GM12878 (cell line): ENCODE measurements at regions of chr1 and their contacts with region 1.

Region 1: GRCh38 chr1:214328770-214329469 is 48.0 kb downstream of the SMYD2 start:
- DNase-seq: peak; percentile 26
- ATAC-seq: peak; percentile 92
- H3K4me3 ChIP-seq: no peak overlapping the region
- H3K27ac ChIP-seq: no peak overlapping the region
- H3K4me1 ChIP-seq: peaks cover 4% of the 10 kb centered on the region; the same call in 1 of the 2 replicates
- H3K27me3 ChIP-seq: no peaks in the 10 kb centered on the region
- CTCF ChIP-seq: peak; percentile 89 to 93 (median 91)
- EP300 ChIP-seq: no peak
- POLR2A ChIP-seq: no peak
- RAD21 ChIP-seq: peak; percentile 99

Region 2: DNA sequence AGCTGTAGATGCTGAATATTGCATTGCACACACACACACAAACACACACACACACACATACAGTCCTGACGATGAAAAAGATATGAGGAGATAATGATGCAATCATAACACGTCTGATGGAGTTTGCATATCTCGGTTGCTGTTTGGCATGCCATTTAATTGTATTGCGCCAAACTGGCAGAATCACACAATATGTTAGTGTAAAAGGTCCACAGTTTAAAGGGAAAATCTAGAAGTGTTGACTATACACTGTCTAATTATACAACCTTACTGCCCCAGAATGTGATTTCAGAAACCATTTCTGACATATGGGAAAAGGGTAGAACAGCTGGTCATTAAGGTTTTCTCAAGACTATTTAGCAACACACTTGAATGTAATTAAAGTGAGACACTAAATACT is 464.8 kb before region 1 on chr1:
- CTCF ChIA-PET with region 1: no interaction called
- POLR2A ChIA-PET with region 1: no interaction called
- RAD21 ChIA-PET with region 1: no interaction called
- SMC1A ChIA-PET with region 1: no interaction called
- in situ Hi-C with region 1: no loop called
- intact Hi-C with region 1: no loop called
- DNase-seq: no peak
- ATAC-seq: no peak
- H3K4me3 ChIP-seq: no peak overlapping the region
- H3K27ac ChIP-seq: no peak overlapping the region
- H3K4me1 ChIP-seq: no peaks in the 10 kb centered on the region
- H3K27me3 ChIP-seq: peaks cover 0 to 3% of the 10 kb centered on the region in 2 experiments; a peak in 1 of 4 replicates
- CTCF ChIP-seq: no peak
- EP300 ChIP-seq: no peak
- POLR2A ChIP-seq: no peak
- RAD21 ChIP-seq: no peak

Region 3: GRCh38 chr1:214205053-214205452 is 123.9 kb before region 1 on chr1:
- CTCF ChIA-PET with region 1: interaction called, 46 read pairs
- POLR2A ChIA-PET with region 1: no interaction called
- RAD21 ChIA-PET with region 1: interaction called, 5 read pairs
- SMC1A ChIA-PET with region 1: interaction called, 5 read pairs
- in situ Hi-C with region 1: loop called (anchors 5 kb)
- intact Hi-C with region 1: no loop called
- DNase-seq: no peak
- ATAC-seq: no peak
- H3K4me3 ChIP-seq: no peak overlapping the region
- H3K27ac ChIP-seq: no peak overlapping the region
- H3K4me1 ChIP-seq: no peaks in the 10 kb centered on the region
- H3K27me3 ChIP-seq: no peaks in the 10 kb centered on the region
- CTCF ChIP-seq: no peak
- EP300 ChIP-seq: no peak
- POLR2A ChIP-seq: no peak
- RAD21 ChIP-seq: no peak

Region 4: DNA sequence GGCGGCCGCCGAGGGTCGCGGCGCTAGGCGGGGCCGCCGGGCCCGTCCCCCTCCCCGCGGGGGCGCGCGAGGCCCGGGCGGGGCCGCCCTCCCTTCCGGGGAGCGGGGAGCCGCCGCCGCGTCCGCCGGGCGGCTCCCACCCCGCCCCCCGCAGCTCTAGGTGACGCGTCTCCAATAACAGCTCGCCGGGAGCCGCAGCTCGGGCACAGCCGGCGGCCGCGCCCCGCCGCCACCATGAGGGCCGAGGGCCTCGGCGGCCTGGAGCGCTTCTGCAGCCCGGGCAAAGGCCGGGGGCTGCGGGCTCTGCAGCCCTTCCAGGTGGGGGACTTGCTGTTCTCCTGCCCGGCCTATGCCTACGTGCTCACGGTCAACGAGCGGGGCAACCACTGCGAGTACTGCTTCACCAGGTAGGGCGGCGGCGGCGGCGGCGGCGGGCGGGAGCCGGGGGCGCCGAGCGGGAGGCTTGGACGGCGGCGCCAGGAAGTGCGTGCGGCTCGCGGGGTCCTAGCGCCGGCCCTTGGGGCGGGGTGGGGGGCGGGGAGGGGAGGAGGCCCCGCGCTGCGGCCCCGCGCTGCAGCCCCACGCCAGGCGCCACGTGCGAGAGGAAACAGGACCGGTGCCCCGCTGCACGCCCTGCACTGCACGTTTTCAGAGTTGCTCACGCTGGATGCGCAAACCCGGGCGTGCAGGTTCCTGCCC is 47.8 kb before region 1 on chr1 and contains the start of gene SMYD2:
- CTCF ChIA-PET with region 1: interaction called, 47 read pairs
- POLR2A ChIA-PET with region 1: no interaction called
- RAD21 ChIA-PET with region 1: interaction called, 8 read pairs
- SMC1A ChIA-PET with region 1: interaction called, 11 read pairs
- in situ Hi-C with region 1: no loop called
- intact Hi-C with region 1: loop called (anchors 5 kb)
- DNase-seq: no peak
- ATAC-seq: peak; percentile 86
- H3K4me3 ChIP-seq: peak within 1 kb of the TSS; percentile 90
- H3K27ac ChIP-seq: peak within 1 kb of the TSS; percentile 71
- H3K4me1 ChIP-seq: no peaks in the 10 kb centered on the region; the same call in 1 of the 2 replicates
- H3K27me3 ChIP-seq: no peaks in the 10 kb centered on the region
- CTCF ChIP-seq: no peak
- EP300 ChIP-seq: no peak
- POLR2A ChIP-seq: peak; percentile 75
- RAD21 ChIP-seq: no peak
- polyA plus RNA-seq, gene SMYD2: 8.3 to 17.0 TPM

Region 5: DNA sequence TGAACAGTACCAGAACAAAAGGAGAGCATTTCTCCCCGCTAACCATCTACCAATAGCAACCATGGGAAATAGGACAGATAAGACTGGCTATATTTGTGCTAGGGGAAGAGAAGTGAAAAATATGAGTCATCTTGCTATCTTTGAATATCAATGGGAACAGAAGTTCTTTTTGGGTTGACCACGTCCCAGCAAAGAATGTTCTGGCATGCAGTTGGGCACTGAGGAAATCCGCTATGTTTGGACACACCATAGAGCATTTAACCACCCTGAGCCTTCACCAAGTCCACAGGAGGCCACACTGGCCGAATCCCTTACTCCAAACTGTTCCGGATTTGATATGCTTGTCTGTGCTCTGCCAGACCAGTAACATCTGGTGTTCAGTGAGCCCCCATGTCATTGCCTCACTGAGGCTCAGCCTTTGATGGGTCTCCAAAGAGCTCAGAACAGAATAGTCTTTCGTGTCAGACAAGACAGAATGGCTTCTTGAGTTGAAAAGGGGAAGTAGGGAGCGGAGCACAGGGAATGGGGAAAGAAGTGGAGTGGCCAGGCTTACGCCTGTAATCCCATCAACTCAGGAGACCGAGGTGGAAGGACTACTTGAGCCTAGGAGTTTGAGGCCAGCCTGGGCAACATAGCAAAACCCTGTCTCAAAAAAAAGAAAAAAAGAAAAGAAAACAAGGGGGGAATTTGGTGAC is 33.4 kb after region 1 on chr1:
- CTCF ChIA-PET with region 1: interaction called, 15 read pairs
- POLR2A ChIA-PET with region 1: no interaction called
- RAD21 ChIA-PET with region 1: interaction called, 3 read pairs
- SMC1A ChIA-PET with region 1: interaction called, 5 read pairs
- in situ Hi-C with region 1: no loop called
- intact Hi-C with region 1: no loop called
- DNase-seq: no peak
- ATAC-seq: no peak
- H3K4me3 ChIP-seq: no peak overlapping the region
- H3K27ac ChIP-seq: no peak overlapping the region
- H3K4me1 ChIP-seq: no peaks in the 10 kb centered on the region
- H3K27me3 ChIP-seq: no peaks in the 10 kb centered on the region
- CTCF ChIP-seq: no peak
- EP300 ChIP-seq: no peak
- POLR2A ChIP-seq: no peak
- RAD21 ChIP-seq: no peak

Region 6: DNA sequence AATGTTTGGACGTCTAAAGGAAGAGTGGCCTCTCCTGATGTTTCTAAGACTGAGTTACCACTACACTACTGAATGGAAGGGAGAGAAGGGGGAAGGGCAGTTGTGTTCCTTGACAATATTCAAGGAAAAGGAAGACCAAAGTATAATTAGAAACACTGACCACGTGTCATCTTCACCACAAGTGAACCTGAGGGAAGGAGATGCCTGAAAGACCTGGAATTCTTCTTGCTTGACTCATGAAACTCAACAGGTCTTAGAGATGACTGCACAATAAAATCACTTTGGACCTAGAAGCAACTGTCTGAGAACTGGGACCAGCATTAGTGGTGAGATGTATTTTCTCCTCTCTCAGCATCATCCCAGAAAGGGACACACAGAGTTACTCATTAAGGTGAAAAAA is 165.8 kb after region 1 on chr1:
- CTCF ChIA-PET with region 1: interaction called, 21 read pairs
- POLR2A ChIA-PET with region 1: no interaction called
- RAD21 ChIA-PET with region 1: no interaction called
- SMC1A ChIA-PET with region 1: interaction called, 4 read pairs
- in situ Hi-C with region 1: no loop called
- intact Hi-C with region 1: no loop called
- DNase-seq: no peak
- ATAC-seq: no peak
- H3K4me3 ChIP-seq: no peak overlapping the region
- H3K27ac ChIP-seq: no peak overlapping the region
- H3K4me1 ChIP-seq: no peaks in the 10 kb centered on the region
- H3K27me3 ChIP-seq: no peaks in the 10 kb centered on the region; a peak in 1 of 4 replicates
- CTCF ChIP-seq: no peak
- EP300 ChIP-seq: no peak
- POLR2A ChIP-seq: no peak
- RAD21 ChIP-seq: no peak

Region 7: GRCh38 chr1:214590696-214591095 is 261.8 kb after region 1 on chr1:
- CTCF ChIA-PET with region 1: interaction called, 597 read pairs
- POLR2A ChIA-PET with region 1: interaction called, 5 read pairs
- RAD21 ChIA-PET with region 1: interaction called, 207 read pairs
- SMC1A ChIA-PET with region 1: interaction called, 292 read pairs
- in situ Hi-C with region 1: loop called (anchors 5 kb)
- intact Hi-C with region 1: loop called (anchors 1 kb)
- DNase-seq: no peak
- ATAC-seq: no peak
- H3K4me3 ChIP-seq: no peak overlapping the region
- H3K27ac ChIP-seq: no peak overlapping the region
- H3K4me1 ChIP-seq: no peaks in the 10 kb centered on the region
- H3K27me3 ChIP-seq: no peaks in the 10 kb centered on the region
- CTCF ChIP-seq: no peak
- EP300 ChIP-seq: no peak
- POLR2A ChIP-seq: no peak
- RAD21 ChIP-seq: no peak